Activated naive CD4-positive, alpha-beta T cell treated with anti-CD3 and anti-CD28 coated beads for 36 hours (primary cell): ENCODE measurements at regions of chr1 and their contacts with region 1.

Region 1: DNA sequence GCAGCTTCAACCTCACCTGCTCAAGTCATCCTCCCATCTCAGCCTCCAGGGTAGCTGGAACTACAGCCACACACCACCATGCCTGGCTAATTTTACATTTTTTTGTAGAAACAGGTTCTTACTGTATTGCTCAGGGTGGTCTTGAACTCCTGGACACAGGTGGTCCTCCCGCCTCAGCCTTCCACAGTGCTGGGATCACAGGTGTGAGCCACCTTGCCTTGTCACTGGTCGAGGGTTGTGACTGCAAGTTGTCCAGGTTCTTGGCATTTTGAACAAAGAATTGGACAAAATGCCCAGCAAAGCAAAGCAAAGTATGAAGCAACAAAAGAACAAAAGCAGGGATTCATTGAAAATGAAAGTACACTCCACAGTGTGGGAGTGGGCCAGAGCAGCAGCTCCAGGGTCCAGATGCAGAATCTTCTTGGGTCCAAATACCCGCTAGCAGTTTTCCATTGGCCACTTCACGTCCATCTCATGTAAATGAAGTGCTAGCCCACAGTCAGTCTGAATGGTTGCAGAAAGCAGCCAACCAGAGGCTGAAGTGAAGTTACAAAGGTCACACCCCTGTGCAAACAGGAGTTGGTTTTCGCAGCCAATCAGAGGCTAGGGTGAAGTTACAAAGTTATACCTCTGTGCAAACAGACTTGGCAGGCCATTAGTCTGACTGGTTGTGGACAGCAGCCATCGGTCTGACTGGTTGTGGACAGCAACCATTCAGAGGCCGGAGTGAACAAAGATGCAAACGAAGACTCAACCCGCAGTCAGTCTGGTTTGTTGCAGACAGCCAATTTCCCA is 109.5 kb upstream of the KIF26B start:
- DNase-seq: no peak
- H3K4me3 Mint-ChIP-seq: no peak overlapping the region
- H3K27ac Mint-ChIP-seq: no peak overlapping the region
- H3K4me1 Mint-ChIP-seq: no peaks in the 10 kb centered on the region
- H3K27me3 Mint-ChIP-seq: no peaks in the 10 kb centered on the region

Region 2: GRCh38 chr1:244801246-244801645 is 244.0 kb before region 1 on chr1:
- CTCF ChIA-PET with region 1: interaction called, 47 read pairs
- intact Hi-C with region 1: loop called (anchors 1 kb)
- DNase-seq: peak; percentile 74
- H3K4me3 Mint-ChIP-seq: no peak overlapping the region
- H3K27ac Mint-ChIP-seq: no peak overlapping the region
- H3K4me1 Mint-ChIP-seq: peaks cover 2% of the 10 kb centered on the region
- H3K27me3 Mint-ChIP-seq: no peaks in the 10 kb centered on the region

Region 3: DNA sequence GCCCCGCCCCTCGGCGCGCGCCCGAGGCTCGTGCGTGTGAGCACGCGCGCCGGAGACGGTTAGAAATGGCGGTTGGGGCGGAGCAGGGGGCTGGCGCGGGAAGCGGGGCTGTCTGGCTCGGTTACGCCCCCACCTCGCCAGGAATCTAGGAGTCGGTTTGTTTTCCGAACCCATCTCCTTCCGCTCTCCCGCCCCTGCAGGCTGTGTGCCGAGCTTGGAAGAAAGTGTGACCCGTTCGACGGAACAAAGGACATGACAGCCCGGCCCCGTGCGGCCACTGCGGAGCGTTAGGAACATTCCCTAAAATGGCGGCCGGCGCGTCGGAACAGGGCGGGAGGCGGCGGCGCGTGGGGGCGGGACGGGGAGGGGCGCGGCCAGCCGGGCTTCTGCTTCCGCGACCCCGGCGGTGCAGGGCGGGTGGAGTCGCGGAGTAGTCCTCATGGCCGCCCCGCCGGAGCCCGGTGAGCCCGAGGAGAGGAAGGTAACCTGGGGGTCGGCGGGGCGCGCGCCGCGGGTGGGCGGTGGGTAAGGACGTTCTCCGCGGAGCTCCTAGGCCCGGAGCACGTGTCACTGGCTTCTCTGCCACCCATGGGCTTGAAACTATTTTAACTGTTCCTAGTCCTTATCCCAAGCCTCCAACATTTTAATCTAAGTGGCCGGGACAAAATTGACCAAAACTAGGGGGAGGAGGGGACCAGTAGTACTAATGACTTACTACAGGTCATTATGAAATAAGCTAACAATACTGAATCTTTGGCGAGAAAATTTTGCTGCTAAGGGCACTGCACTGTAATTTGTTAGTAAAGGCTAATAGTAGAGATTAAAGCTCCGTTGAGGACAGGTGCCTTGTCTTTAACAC is 209.8 kb before region 1 on chr1 and contains the start of gene COX20:
- CTCF ChIA-PET with region 1: interaction called, 5 read pairs
- intact Hi-C with region 1: loop called (anchors 1 kb)
- DNase-seq: peak; percentile 85
- H3K4me3 Mint-ChIP-seq: peak within 1 kb of the TSS; percentile 94
- H3K27ac Mint-ChIP-seq: peak within 1 kb of the TSS; percentile 99
- H3K4me1 Mint-ChIP-seq: peaks cover 38% of the 10 kb centered on the region
- H3K27me3 Mint-ChIP-seq: no peaks in the 10 kb centered on the region
- total RNA-seq, gene COX20: 21.4 to 24.2 TPM

Region 4: DNA sequence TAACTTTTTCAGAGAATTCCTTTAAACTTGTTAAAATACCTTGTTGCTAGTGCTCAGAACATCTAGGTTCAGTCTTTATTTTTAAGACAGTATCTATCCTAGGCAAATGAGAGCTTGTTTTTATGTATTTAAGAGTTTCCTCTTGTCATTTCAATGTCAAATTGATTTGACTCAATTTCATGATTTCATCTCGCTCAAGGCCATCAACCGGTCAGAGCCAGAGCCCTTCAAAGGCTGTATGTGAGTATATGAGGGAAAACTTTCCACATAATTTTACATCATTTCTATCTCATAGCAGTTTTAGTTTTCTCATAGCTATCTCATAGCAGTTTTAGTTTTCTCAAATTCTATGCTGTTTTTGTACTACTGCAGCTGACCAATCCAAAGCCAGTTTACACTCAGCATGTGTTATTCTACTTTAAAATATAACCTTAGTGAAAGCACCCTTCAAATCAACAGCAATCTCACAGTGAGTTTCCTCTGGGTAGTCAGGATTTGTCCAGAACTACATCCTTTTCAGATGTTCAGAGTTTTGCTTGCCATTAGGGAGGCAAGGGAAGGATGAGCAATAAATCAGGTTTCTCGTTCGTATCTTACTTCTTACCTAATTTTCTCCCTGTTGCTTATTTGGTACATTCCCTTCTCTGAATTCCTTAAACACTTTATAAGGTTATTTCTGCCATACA is 193.6 kb before region 1 on chr1:
- CTCF ChIA-PET with region 1: interaction called, 13 read pairs
- intact Hi-C with region 1: no loop called
- DNase-seq: no peak
- H3K4me3 Mint-ChIP-seq: no peak overlapping the region
- H3K27ac Mint-ChIP-seq: peak overlapping the region; percentile 76
- H3K4me1 Mint-ChIP-seq: peaks cover 74% of the 10 kb centered on the region
- H3K27me3 Mint-ChIP-seq: no peaks in the 10 kb centered on the region

Region 5: GRCh38 chr1:244964112-244964971 is 80.9 kb before region 1 on chr1:
- CTCF ChIA-PET with region 1: interaction called, 16 read pairs
- intact Hi-C with region 1: no loop called
- DNase-seq: peak; percentile 27
- H3K4me3 Mint-ChIP-seq: no peak overlapping the region
- H3K27ac Mint-ChIP-seq: no peak overlapping the region
- H3K4me1 Mint-ChIP-seq: peaks cover 16% of the 10 kb centered on the region
- H3K27me3 Mint-ChIP-seq: no peaks in the 10 kb centered on the region

Region 6: GRCh38 chr1:245031041-245031440 is 14.2 kb before region 1 on chr1:
- CTCF ChIA-PET with region 1: interaction called, 17 read pairs
- intact Hi-C with region 1: no loop called
- DNase-seq: no peak
- H3K4me3 Mint-ChIP-seq: no peak overlapping the region
- H3K27ac Mint-ChIP-seq: no peak overlapping the region
- H3K4me1 Mint-ChIP-seq: peaks cover 5% of the 10 kb centered on the region
- H3K27me3 Mint-ChIP-seq: no peaks in the 10 kb centered on the region

Region 7: GRCh38 chr1:245173446-245174211 is 128.3 kb after region 1 on chr1:
- CTCF ChIA-PET with region 1: no interaction called
- intact Hi-C with region 1: no loop called
- DNase-seq: no peak
- H3K4me3 Mint-ChIP-seq: no peak overlapping the region
- H3K27ac Mint-ChIP-seq: no peak overlapping the region
- H3K4me1 Mint-ChIP-seq: no peaks in the 10 kb centered on the region
- H3K27me3 Mint-ChIP-seq: peaks cover 15% of the 10 kb centered on the region